Breast epithelium (tissue), 4 donors: ENCODE measurements at regions of chr5 and their contacts with region 1.

Region 1: DNA sequence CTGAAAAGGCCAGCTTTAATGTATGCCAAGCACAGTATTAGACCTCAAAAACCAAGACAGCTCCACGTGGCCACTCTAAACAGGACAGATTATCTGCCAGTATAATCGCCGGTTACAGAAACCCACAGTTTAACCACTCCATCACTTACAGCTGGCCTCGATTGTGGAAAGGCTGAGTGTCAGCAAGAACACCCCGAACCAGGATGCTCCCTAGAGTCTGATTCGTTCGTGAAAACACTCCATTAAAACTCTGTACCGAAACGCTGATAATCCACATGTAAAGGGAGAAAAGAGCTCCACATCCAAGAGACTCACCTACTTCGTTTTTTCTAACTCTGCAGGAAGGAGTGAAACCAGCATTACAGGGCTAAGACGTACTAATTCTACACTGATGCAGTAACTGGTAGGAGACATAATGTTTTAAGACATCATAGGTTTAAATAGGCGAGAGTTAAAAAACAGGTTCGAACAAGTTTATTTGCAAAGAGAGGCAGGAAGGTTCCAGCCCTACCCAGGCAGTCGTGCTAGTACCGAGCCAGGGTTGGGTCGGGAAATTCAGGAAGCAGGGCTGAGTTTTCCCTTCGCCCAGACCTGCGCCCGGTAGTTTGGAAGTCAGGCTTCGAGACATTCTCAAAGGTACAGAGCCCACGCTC is 955 bp downstream of the SERINC5 start:
- DNase-seq: peak in 1 of 2 donors; percentile 54
- H3K4me3 ChIP-seq: peak overlapping the region; percentile 75 to 88 (median 87)
- H3K27ac ChIP-seq: peak overlapping the region; percentile 94 to 99
- H3K4me1 ChIP-seq: peaks cover 0 to 12% of the 10 kb centered on the region in 2 donors
- H3K27me3 ChIP-seq: no peaks in the 10 kb centered on the region
- CTCF ChIP-seq: no peak
- POLR2A ChIP-seq: no peak

Region 2: GRCh38 chr5:78899922-78900362 is 1355.0 kb before region 1 on chr5:
- intact Hi-C with region 1: no loop called
- DNase-seq: no peak
- H3K4me3 ChIP-seq: no peak overlapping the region
- H3K27ac ChIP-seq: no peak overlapping the region
- H3K4me1 ChIP-seq: no peaks in the 10 kb centered on the region
- H3K27me3 ChIP-seq: no peaks in the 10 kb centered on the region
- CTCF ChIP-seq: no peak
- POLR2A ChIP-seq: no peak

Region 3: GRCh38 chr5:80191991-80192398 is 62.9 kb before region 1 on chr5:
- intact Hi-C with region 1: loop called (anchors 5 kb)
- DNase-seq: no peak
- H3K4me3 ChIP-seq: no peak overlapping the region
- H3K27ac ChIP-seq: peak overlapping the region; percentile 64 to 72
- H3K4me1 ChIP-seq: peaks cover 7 to 28% of the 10 kb centered on the region in 2 donors
- H3K27me3 ChIP-seq: no peaks in the 10 kb centered on the region
- CTCF ChIP-seq: no peak
- POLR2A ChIP-seq: no peak